ENCODE measurements at regions of chr12 and their contacts with region 1.

Region 1: GRCh38 chr12:50763639-50764285 is at the start of gene ATF1:
- DNase-seq: peak; percentile 91
- H3K4me3 Mint-ChIP-seq: peak within 1 kb of the TSS; percentile 97
- H3K27ac Mint-ChIP-seq: peak within 1 kb of the TSS; percentile 98
- H3K4me1 Mint-ChIP-seq: peaks cover 37% of the 10 kb centered on the region
- H3K27me3 Mint-ChIP-seq: no peaks in the 10 kb centered on the region
- total RNA-seq, gene ATF1: 65.7 and 65.8 TPM in 2 replicates

Region 2: GRCh38 chr12:50400598-50401364 is 363.0 kb before region 1 on chr12 and contains the start of gene LARP4:
- intact Hi-C with region 1: loop called (anchors 2 kb)
- DNase-seq: peak; percentile 91
- H3K4me3 Mint-ChIP-seq: peak within 1 kb of the TSS; percentile 97
- H3K27ac Mint-ChIP-seq: peak within 1 kb of the TSS; percentile 90
- H3K4me1 Mint-ChIP-seq: peaks cover 22% of the 10 kb centered on the region
- H3K27me3 Mint-ChIP-seq: peaks cover 3% of the 10 kb centered on the region
- total RNA-seq, gene LARP4: 119 and 128 TPM in 2 replicates

Region 3: GRCh38 chr12:50825372-50825838 is 61.6 kb after region 1 on chr12:
- intact Hi-C with region 1: loop called (anchors 1 kb)
- DNase-seq: no peak
- H3K4me3 Mint-ChIP-seq: no peak overlapping the region
- H3K27ac Mint-ChIP-seq: peak overlapping the region; percentile 69
- H3K4me1 Mint-ChIP-seq: peaks cover 10% of the 10 kb centered on the region
- H3K27me3 Mint-ChIP-seq: no peaks in the 10 kb centered on the region

Region 4: GRCh38 chr12:51025836-51026638 is 262.3 kb after region 1 on chr12 and contains the start of gene SLC11A2:
- intact Hi-C with region 1: loop called (anchors 1 kb)
- DNase-seq: peak; percentile 91
- H3K4me3 Mint-ChIP-seq: peak within 1 kb of the TSS; percentile 92
- H3K27ac Mint-ChIP-seq: peak within 1 kb of the TSS; percentile 98
- H3K4me1 Mint-ChIP-seq: peaks cover 55% of the 10 kb centered on the region
- H3K27me3 Mint-ChIP-seq: peaks cover 18% of the 10 kb centered on the region
- total RNA-seq, gene SLC11A2: 56.9 and 63.9 TPM in 2 replicates

Region 5: GRCh38 chr12:51172515-51173431 is 409.0 kb after region 1 on chr12 and contains the start of gene TFCP2:
- intact Hi-C with region 1: loop called (anchors 2 kb)
- DNase-seq: peak; percentile 93
- H3K4me3 Mint-ChIP-seq: peak within 1 kb of the TSS; percentile 85
- H3K27ac Mint-ChIP-seq: peak within 1 kb of the TSS; percentile 78
- H3K4me1 Mint-ChIP-seq: peaks cover 8% of the 10 kb centered on the region
- H3K27me3 Mint-ChIP-seq: peaks cover 3% of the 10 kb centered on the region
- total RNA-seq, gene TFCP2: 49.1 and 49.8 TPM in 2 replicates

Region 6: GRCh38 chr12:51341259-51342007 is 577.7 kb after region 1 on chr12:
- intact Hi-C with region 1: loop called (anchors 1 kb)
- DNase-seq: peak; percentile 63
- H3K4me3 Mint-ChIP-seq: no peak overlapping the region
- H3K27ac Mint-ChIP-seq: no peak overlapping the region
- H3K4me1 Mint-ChIP-seq: peaks cover 12% of the 10 kb centered on the region
- H3K27me3 Mint-ChIP-seq: peaks cover 6% of the 10 kb centered on the region

Measured in activated T-helper 1 cell treated with anti-CD3 and anti-CD28 coated beads, Interleukin-12 subunit alpha, Interleukin-12 subunit beta, Interleukin-2, Interleukin-4 antibody, amounts not matched to agents 30 ng/mL and 10 ng/mL and 1 ng/mL, durations not matched to agents 14 hours and 24 hours and 36 hours (primary cell).